Esophagus squamous epithelium (tissue), 5 donors: ENCODE measurements at regions of chr5 and their contacts with region 1.

Region 1: GRCh38 chr5:59174248-59174844 is 591.5 kb downstream of the RAB3C start:
- DNase-seq: no peak
- H3K4me3 ChIP-seq: no peak overlapping the region
- H3K27ac ChIP-seq: no peak overlapping the region
- H3K4me1 ChIP-seq: no peaks in the 10 kb centered on the region
- H3K27me3 ChIP-seq: no peaks in the 10 kb centered on the region
- CTCF ChIP-seq: peak; percentile 40 to 85 (median 76)
- POLR2A ChIP-seq: no peak

Region 2: GRCh38 chr5:58886315-58887207 is 287.8 kb before region 1 on chr5:
- intact Hi-C with region 1: loop called (anchors 10 kb)
- DNase-seq: no peak
- H3K4me3 ChIP-seq: no peak overlapping the region
- H3K27ac ChIP-seq: no peak overlapping the region
- H3K4me1 ChIP-seq: peaks cover 0 to 7% (median 0%) of the 10 kb centered on the region in 3 donors
- H3K27me3 ChIP-seq: no peaks in the 10 kb centered on the region
- CTCF ChIP-seq: peak; percentile 75 to 86 (median 81)
- POLR2A ChIP-seq: no peak

Region 3: DNA sequence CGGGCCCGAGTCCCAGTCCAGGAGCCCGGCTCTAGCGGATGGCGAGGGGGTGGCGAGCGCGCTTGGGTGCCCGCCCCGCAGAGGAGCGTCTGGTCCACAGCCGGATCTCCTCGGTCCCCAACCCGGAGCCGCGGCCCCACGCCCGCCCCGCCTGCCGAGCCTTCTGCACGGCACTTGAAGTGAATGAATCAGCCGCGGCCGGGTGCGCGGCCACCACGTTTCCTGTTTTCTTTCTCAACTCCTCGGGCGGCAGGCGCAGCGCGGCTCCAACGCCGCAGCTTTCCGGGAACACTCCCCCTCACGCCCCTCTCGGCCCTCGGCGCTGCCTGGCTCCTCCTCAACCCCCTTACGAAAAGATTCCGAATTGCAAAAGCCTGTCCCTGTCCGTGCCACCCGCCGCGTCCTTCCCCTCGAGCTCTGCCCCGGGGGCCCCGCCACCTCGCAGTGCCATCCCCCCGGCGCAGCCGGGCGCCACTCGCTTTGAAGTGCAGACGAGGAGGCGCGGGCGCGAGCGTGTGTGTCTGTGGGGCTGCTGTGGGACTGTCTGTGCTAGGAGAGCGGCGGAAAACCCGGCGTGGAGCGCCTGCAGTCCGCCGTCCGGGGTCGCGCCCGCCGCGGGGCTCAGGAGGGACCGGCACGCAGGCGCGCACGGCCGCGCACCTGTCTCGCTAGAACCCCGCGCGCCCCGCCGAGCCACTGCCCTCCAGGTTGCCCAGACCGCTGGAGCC is 134.9 kb before region 1 on chr5:
- intact Hi-C with region 1: loop called (anchors 10 kb)
- DNase-seq: peak; percentile 47
- H3K4me3 ChIP-seq: peak overlapping the region; percentile 54 to 77 (median 70)
- H3K27ac ChIP-seq: peak overlapping the region; percentile 72 to 91 (median 80)
- H3K4me1 ChIP-seq: peaks cover 0 to 69% (median 23%) of the 10 kb centered on the region in 3 donors
- H3K27me3 ChIP-seq: peaks cover 0 to 15% (median 0%) of the 10 kb centered on the region in 4 donors
- CTCF ChIP-seq: no peak
- POLR2A ChIP-seq: peak in 2 of 4 donors; percentile 48 to 74